ENCODE measurements at regions of chr2 and their contacts with region 1.

Region 1: GRCh38 chr2:96485751-96486651 is 19.2 kb downstream of the NEURL3 start:
- DNase-seq: peak; percentile 23
- H3K4me3 ChIP-seq: peak overlapping the region; percentile 15
- H3K27ac ChIP-seq: peak overlapping the region; percentile 12
- H3K4me1 ChIP-seq: peaks cover 12% of the 10 kb centered on the region
- H3K27me3 ChIP-seq: no peaks in the 10 kb centered on the region
- CTCF ChIP-seq: no peak

Region 2: GRCh38 chr2:96427917-96428316 is 58.1 kb before region 1 on chr2:
- CTCF ChIA-PET with region 1: no interaction called
- POLR2A ChIA-PET with region 1: interaction called, 15 read pairs
- intact Hi-C with region 1: no loop called
- DNase-seq: peak; percentile 79
- H3K4me3 ChIP-seq: no peak overlapping the region
- H3K27ac ChIP-seq: no peak overlapping the region
- H3K4me1 ChIP-seq: peaks cover 12% of the 10 kb centered on the region
- H3K27me3 ChIP-seq: no peaks in the 10 kb centered on the region
- CTCF ChIP-seq: no peak

Region 3: GRCh38 chr2:96507908-96508520 is 22.0 kb after region 1 on chr2:
- CTCF ChIA-PET with region 1: no interaction called
- POLR2A ChIA-PET with region 1: no interaction called
- intact Hi-C with region 1: no loop called
- DNase-seq: peak; percentile 81
- H3K4me3 ChIP-seq: peak overlapping the region; percentile 43
- H3K27ac ChIP-seq: no peak overlapping the region
- H3K4me1 ChIP-seq: peaks cover 4% of the 10 kb centered on the region
- H3K27me3 ChIP-seq: no peaks in the 10 kb centered on the region
- CTCF ChIP-seq: peak; percentile 97

Measured in A673 (cell line).